SK-N-SH (cell line): ENCODE measurements at regions of chr7 and their contacts with region 1.

Region 1: GRCh38 chr7:33932832-33933468 is 27.6 kb downstream of the BMPER start:
- DNase-seq: peak; percentile 80
- H3K4me3 ChIP-seq: peak overlapping the region; percentile 30 to 49
- H3K27ac ChIP-seq: peak overlapping the region in 1 of 2 experiments; percentile 91; a peak in 2 of 4 replicates
- H3K4me1 ChIP-seq: peaks cover 19 to 24% of the 10 kb centered on the region in 2 experiments
- H3K27me3 ChIP-seq: no peaks in the 10 kb centered on the region
- CTCF ChIP-seq: peak; percentile 100
- EP300 ChIP-seq: no peak; a peak in 1 of 4 replicates
- RAD21 ChIP-seq: peak; percentile 91

Region 2: DNA sequence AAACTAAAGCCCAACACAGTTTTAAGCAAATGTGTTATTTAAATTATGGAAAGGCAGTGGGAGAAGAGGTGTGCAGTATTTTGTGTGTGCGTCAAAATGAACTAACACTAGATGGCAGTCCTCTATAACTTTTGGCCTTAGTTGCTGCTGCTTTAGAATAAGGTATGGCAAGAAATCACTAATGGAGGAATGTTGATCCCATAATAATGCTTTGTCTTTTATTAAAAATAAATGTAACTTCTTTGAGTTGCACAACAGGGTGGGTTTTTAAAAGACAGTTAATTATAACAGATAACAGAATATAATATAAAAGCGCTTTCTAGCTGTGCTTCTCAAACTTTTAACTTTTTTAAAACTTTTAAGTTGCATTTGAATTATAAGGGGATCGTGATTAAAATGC is 747.2 kb before region 1 on chr7:
- CTCF ChIA-PET with region 1: interaction called, 34 read pairs
- POLR2A ChIA-PET with region 1: no interaction called
- DNase-seq: peak; percentile 63
- H3K4me3 ChIP-seq: no peak overlapping the region; a peak in 1 of 4 replicates
- H3K27ac ChIP-seq: no peak overlapping the region
- H3K4me1 ChIP-seq: peaks cover 0 to 6% of the 10 kb centered on the region in 2 experiments; a peak in 2 of 4 replicates
- H3K27me3 ChIP-seq: no peaks in the 10 kb centered on the region
- CTCF ChIP-seq: peak; percentile 95
- EP300 ChIP-seq: no peak
- RAD21 ChIP-seq: peak; percentile 98

Region 3: DNA sequence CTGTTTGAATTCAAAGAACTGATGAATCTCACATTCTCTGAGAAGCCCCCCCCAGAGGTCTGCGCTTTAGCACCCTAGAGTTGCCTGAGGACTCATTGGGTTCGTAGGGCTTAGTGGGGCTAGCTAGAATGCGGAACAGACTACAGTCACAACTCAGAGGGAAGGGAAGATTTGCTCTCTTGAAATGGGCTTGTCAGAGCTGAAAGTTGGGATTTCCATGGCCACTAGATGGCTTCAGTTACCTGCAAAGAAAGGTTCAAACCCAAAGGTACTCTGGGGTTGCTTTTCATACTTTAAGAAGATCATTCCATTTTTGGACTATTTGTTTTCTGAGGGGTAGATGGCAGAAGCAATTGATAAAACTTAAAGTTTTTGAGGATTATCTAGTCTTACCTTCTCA is 598.6 kb before region 1 on chr7:
- CTCF ChIA-PET with region 1: interaction called, 19 read pairs
- POLR2A ChIA-PET with region 1: no interaction called
- DNase-seq: peak; percentile 16
- H3K4me3 ChIP-seq: no peak overlapping the region
- H3K27ac ChIP-seq: no peak overlapping the region
- H3K4me1 ChIP-seq: no peaks in the 10 kb centered on the region
- H3K27me3 ChIP-seq: no peaks in the 10 kb centered on the region
- CTCF ChIP-seq: peak; percentile 57
- EP300 ChIP-seq: no peak
- RAD21 ChIP-seq: peak; percentile 81

Region 4: DNA sequence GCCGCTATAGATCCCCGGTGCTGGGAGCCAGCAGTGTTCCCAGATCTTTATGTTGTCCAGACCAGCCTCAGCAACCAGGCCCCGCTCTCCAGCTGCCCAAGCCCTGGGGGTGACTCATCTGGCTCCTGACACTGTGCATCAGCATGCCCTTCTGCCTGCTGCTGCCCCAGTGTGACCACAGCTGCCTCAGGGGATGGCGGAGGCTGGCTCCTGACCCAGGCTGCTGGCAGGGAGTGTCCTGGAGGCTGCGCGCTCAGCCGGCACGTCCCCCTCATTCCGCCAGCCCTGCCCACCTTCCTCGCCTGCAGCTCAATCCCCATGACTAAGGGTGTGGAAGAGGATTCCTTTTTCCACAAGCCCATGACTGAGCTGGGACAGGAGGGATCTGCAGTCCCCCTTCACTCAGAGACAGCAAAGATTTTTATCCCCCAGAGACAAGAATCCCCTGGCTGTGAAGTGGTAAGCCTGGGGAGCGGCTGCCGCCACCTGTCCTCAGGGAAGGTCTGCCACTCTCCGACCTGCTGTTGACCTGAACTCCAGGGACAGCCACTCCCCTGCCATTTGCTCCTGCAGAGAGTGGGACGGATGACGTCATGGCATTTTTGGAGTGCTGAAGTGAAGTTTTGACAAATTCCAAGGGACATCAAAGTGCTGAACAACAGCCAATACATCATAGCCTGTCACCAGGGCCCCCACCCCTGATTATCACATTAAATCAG is 210.4 kb before region 1 on chr7:
- CTCF ChIA-PET with region 1: interaction called, 26 read pairs
- POLR2A ChIA-PET with region 1: no interaction called
- DNase-seq: peak; percentile 93
- H3K4me3 ChIP-seq: peak overlapping the region; percentile 25 to 31
- H3K27ac ChIP-seq: peak overlapping the region; percentile 33 to 77
- H3K4me1 ChIP-seq: peaks cover 9 to 27% of the 10 kb centered on the region in 2 experiments
- H3K27me3 ChIP-seq: no peaks in the 10 kb centered on the region
- CTCF ChIP-seq: no peak
- EP300 ChIP-seq: peak; percentile 17 to 94; a peak in 3 of 4 replicates
- RAD21 ChIP-seq: 0 out of 2 replicates have a peak, but pooled peaks have one; percentile 2

Region 5: DNA sequence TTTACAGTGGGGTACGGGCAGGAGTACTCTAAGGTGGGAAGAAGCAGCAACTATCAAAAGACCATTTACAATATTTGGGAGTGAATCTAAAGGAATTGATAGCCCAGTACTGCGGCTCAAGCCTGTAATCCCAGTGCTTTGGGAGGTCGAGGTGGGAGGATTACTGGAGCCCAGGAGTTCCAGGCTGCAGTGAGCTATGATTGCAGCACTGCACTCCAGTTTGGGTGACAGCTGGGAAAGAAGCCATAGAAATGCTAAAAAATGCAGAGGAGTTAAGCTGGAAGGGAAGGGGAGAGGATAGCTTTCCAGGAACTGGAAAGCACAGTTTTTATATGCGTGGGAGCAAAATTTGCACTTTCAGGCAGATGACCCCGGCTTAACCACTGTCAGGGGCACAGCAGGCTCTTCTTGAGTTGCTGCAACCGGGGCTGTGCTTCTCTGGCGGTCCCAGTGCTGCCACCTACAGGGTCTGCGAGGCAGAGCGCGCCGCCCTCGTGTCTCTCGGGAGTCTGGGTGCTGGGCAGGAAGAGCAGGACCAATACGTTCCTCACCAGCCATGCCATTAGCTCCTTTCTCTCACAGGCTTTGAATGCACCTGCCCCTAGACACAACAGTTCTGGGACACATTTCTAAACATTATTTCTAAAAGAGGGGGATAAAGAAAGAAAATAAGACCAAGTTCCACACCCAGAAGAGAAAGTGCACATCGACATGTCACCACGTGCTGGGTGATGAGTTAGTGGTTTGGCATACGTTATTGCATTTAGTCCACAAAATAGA is 37.7 kb before region 1 on chr7:
- CTCF ChIA-PET with region 1: interaction called, 26 read pairs
- POLR2A ChIA-PET with region 1: no interaction called
- DNase-seq: peak; percentile 84
- H3K4me3 ChIP-seq: peak overlapping the region in 1 of 2 experiments; percentile 4; a peak in 1 of 4 replicates
- H3K27ac ChIP-seq: no peak overlapping the region
- H3K4me1 ChIP-seq: peaks cover 2 to 10% of the 10 kb centered on the region in 2 experiments; a peak in 2 of 4 replicates
- H3K27me3 ChIP-seq: no peaks in the 10 kb centered on the region
- CTCF ChIP-seq: peak; percentile 99
- EP300 ChIP-seq: no peak
- RAD21 ChIP-seq: peak; percentile 86

Region 6: DNA sequence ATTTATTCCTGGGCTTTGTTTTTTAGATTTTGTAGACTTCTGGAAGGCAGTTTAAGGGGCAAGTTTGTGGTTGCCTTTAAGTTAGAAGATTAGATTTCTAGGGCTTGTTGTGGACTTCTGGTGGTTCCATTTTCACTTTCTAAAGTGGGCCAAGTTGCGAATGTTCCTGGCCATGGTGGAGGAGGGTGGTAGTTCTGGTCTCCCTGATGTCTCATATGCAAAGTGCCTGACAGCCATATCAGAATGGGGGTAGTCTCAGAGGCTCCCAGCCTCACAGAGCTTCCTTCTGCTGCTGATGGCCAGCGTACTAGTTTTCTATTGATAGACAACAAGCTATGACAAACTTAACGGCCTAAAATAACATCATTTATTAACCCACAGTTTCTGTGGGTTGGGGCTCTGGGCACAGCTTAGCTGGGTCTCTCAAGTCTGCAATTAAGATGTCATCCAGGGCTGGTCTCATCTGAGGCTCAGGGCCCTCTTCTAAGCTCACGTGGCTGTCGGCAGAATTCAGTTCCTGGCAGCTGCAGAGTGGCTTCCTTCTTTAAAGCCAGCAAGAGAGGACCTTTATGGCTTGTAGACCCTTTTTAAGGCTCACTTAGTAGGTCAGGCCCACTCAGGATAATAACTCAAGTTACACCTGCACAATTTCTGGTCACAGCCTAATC is 17.2 kb after region 1 on chr7:
- CTCF ChIA-PET with region 1: interaction called, 21 read pairs
- POLR2A ChIA-PET with region 1: interaction called, 3 read pairs
- DNase-seq: no peak
- H3K4me3 ChIP-seq: no peak overlapping the region
- H3K27ac ChIP-seq: no peak overlapping the region
- H3K4me1 ChIP-seq: peaks cover 3 to 17% of the 10 kb centered on the region in 2 experiments
- H3K27me3 ChIP-seq: no peaks in the 10 kb centered on the region
- CTCF ChIP-seq: no peak
- EP300 ChIP-seq: no peak
- RAD21 ChIP-seq: no peak

Region 7: GRCh38 chr7:34036051-34036945 is 103.3 kb after region 1 on chr7:
- CTCF ChIA-PET with region 1: no interaction called
- POLR2A ChIA-PET with region 1: no interaction called
- DNase-seq: no peak
- H3K4me3 ChIP-seq: no peak overlapping the region
- H3K27ac ChIP-seq: no peak overlapping the region
- H3K4me1 ChIP-seq: peaks cover 0 to 20% of the 10 kb centered on the region in 2 experiments; a peak in 2 of 4 replicates
- H3K27me3 ChIP-seq: no peaks in the 10 kb centered on the region
- CTCF ChIP-seq: no peak
- EP300 ChIP-seq: no peak
- RAD21 ChIP-seq: no peak